ENCODE measurements at regions of chr15 and their contacts with region 1.

Region 1: DNA sequence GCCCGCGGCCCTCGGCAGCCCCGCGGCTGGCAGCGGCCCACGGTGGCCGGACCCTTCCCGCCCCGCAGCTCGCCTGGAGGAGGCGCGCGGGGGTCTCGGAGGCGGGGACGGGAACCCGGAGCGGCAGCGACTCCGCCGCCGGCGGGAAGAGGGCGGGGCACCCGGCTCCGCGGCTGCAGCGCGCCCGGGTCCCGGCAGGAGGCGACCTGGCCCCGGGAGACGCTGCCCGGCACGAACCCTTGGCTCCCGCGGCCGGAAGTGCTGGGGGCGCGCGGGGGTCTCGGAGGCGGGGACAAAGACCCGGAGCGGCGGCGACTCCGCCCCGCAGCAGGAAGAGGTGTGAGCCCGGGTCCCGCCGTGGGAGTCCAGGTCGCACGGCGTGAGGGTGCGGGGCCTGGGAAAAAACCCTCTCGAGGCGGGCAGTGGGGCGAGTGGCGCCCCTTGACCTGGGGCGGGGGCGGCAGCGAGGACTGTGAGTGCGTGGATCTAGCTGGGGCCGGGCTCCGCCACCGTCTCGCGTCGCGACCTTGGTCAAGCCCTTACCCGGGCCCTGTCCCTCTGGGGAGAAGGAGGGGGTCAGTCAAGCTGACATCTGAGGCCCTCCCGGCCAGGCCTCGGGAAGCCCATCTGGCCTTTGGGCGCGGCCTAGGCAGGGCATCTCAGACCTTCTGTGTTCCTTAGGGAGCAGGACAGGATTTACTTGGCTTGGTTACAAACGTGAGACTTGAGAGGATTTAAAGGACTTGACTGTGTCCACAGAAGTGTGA is at the start of gene CIB2:
- DNase-seq: peak; percentile 86
- ATAC-seq: peak; percentile 89
- total RNA-seq, gene CIB2: 21.2 TPM

Region 2: DNA sequence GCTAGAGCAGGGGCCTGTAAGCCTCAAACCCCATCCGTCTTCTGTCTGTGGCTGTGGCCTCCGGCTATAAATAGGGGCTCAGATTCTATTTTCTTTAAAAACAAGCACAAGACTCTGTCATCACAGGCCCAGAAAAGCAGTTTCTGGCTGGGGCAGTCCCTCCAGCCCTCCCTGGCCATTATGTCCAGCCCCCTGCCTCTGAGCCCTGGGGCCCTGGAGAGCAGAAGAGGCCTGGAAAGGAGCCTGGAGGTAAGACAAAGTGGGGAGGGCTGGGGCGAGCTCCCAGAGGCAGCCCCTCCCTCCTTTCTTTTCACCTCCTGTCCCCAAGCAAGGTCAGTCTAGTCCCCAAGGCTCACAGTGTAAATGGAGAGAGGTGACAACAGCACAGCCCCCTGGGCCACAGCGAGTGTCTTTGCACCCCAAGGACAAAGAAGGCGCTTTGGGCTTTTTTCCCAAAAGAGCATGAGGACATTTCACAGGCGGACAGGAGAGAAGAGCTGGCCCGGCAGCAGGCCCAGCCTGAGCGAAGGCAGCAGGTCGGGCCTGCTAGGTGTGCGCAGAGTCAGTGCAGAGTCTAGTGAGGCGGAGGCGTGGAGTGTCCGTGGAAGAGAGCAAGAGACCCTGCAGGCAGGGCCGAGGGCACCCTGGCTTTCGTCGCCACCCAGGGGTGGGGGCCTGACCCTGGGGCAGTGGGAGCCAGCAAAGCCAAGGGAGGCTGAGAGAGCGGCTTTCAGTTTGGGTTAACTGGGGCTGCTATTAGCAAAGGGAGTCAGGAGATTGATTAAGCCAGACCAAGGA is 242.3 kb before region 1 on chr15:
- intact Hi-C with region 1: no loop called
- DNase-seq: peak; percentile 27
- ATAC-seq: no peak

Region 3: GRCh38 chr15:78149068-78149804 is 17.8 kb after region 1 on chr15 and contains the start of gene IDH3A:
- intact Hi-C with region 1: loop called (anchors 2 kb)
- DNase-seq: peak; percentile 100
- ATAC-seq: peak; percentile 98
- total RNA-seq, gene IDH3A: 425 TPM

Region 4: DNA sequence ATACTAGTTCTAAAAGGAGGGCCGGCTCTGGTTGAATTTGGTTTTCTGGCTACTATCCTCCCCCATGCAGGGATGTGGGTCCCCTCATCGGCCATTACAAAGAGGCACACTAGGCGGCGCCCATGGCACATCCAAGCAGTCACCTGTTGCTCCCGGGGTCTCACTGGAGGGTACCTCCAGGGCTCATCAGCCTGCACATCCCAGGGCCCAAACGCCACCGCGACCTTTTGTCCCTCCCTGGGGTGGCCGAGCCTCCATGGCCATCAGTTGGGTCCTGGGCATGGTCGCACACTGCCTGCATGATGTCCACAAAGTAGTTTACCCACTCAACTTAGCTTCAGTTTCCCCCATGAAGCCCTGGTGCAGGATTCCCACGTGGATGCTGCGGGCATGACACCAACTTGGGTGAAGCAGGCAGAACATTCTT is 46.0 kb after region 1 on chr15:
- intact Hi-C with region 1: loop called (anchors 5 kb)
- DNase-seq: no peak
- ATAC-seq: peak; percentile 51

Measured in Right ventricle myocardium inferior (tissue), 1 donor.